H1 (cell line): ENCODE measurements at regions of chr2 and their contacts with region 1.

Region 1: GRCh38 chr2:106868275-106868674 is 17.7 kb downstream of the ST6GAL2 start:
- DNase-seq: no peak
- H3K4me3 ChIP-seq: no peak overlapping the region
- H3K27ac ChIP-seq: no peak overlapping the region
- H3K4me1 ChIP-seq: peaks cover 0 to 10% (median 6%) of the 10 kb centered on the region in 4 experiments; a peak in 4 of 7 replicates
- H3K27me3 ChIP-seq: peaks cover 0 to 1% (median 0%) of the 10 kb centered on the region in 4 experiments; a peak in 1 of 7 replicates
- CTCF ChIP-seq: peak; percentile 40 to 72 (median 44); a peak in 3 of 4 replicates
- EP300 ChIP-seq: no peak
- POLR2A ChIP-seq: no peak
- RAD21 ChIP-seq: peak; percentile 54 to 57

Region 2: GRCh38 chr2:106847366-106847765 is 20.9 kb before region 1 on chr2:
- CTCF ChIA-PET with region 1: interaction called, 19 read pairs
- POLR2A ChIA-PET with region 1: no interaction called
- DNase-seq: no peak
- H3K4me3 ChIP-seq: no peak overlapping the region
- H3K27ac ChIP-seq: no peak overlapping the region
- H3K4me1 ChIP-seq: peaks cover 0 to 16% (median 8%) of the 10 kb centered on the region in 4 experiments; a peak in 4 of 7 replicates
- H3K27me3 ChIP-seq: no peaks in the 10 kb centered on the region
- CTCF ChIP-seq: no peak
- EP300 ChIP-seq: no peak
- POLR2A ChIP-seq: no peak
- RAD21 ChIP-seq: no peak

Region 3: GRCh38 chr2:106853631-106854030 is 14.6 kb before region 1 on chr2:
- CTCF ChIA-PET with region 1: interaction called, 19 read pairs
- POLR2A ChIA-PET with region 1: no interaction called
- DNase-seq: no peak
- H3K4me3 ChIP-seq: no peak overlapping the region
- H3K27ac ChIP-seq: no peak overlapping the region
- H3K4me1 ChIP-seq: peaks cover 3 to 19% (median 14%) of the 10 kb centered on the region in 4 experiments
- H3K27me3 ChIP-seq: no peaks in the 10 kb centered on the region
- CTCF ChIP-seq: no peak
- EP300 ChIP-seq: no peak
- POLR2A ChIP-seq: no peak
- RAD21 ChIP-seq: no peak

Region 4: DNA sequence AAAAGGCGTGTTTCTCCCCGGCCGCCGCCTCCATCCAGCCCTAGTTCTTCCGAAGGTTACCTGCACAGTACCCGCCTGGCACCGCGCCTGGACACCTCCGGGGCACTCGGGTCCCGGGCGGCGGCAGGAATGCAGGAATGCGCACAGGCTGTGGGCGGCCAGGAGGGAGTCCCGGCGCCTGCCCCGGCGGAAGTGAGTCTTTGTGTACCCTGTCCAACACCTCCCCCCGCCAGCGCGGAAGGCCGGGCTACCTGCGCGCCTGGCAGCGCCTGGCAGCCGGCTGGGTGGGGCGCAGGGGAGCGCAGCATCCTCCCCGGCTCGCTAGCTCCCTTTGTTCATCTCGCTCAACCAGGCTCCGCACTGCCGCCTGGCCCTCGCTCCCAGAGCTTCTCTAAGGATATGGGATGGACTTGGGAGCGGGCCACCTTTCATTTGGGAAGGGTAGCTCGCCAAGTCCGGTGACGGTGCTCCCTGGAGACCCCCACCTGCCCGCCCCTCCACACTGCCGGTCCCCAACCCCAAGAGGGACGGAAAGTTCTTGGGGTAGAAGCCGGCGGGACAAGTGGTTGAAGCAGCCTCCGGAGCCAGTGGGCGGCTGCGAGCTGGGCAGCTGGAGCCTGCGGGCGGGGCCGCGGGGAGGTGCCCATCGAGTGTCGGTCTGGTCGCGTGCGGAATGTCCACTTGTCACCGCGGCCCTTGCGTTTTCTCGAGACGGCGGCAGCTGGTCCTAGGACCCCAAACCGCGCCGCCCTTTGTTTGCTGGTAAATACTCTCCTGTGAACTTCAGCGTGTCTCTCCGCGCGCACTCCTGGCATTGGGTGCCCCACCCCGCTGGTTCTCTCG is 18.9 kb after region 1 on chr2:
- CTCF ChIA-PET with region 1: interaction called, 10 read pairs
- POLR2A ChIA-PET with region 1: interaction called, 17 read pairs
- DNase-seq: peak; percentile 51 to 85
- H3K4me3 ChIP-seq: peak overlapping the region; percentile 74 to 78 (median 74)
- H3K27ac ChIP-seq: no peak overlapping the region
- H3K4me1 ChIP-seq: peaks cover 0 to 15% (median 6%) of the 10 kb centered on the region in 4 experiments; a peak in 5 of 7 replicates
- H3K27me3 ChIP-seq: peaks cover 0 to 22% (median 16%) of the 10 kb centered on the region in 4 experiments; a peak in 6 of 7 replicates
- CTCF ChIP-seq: no peak
- EP300 ChIP-seq: no peak; a peak in 1 of 3 replicates
- POLR2A ChIP-seq: peak in 1 of 2 experiments; percentile 65; a peak in 2 of 3 replicates
- RAD21 ChIP-seq: peak in 1 of 2 experiments; percentile 1; a peak in 1 of 4 replicates

Region 5: GRCh38 chr2:106904231-106904630 is 36.0 kb after region 1 on chr2:
- CTCF ChIA-PET with region 1: no interaction called
- POLR2A ChIA-PET with region 1: no interaction called
- DNase-seq: no peak
- H3K4me3 ChIP-seq: no peak overlapping the region
- H3K27ac ChIP-seq: no peak overlapping the region
- H3K4me1 ChIP-seq: no peaks in the 10 kb centered on the region
- H3K27me3 ChIP-seq: no peaks in the 10 kb centered on the region
- CTCF ChIP-seq: no peak
- EP300 ChIP-seq: no peak
- POLR2A ChIP-seq: no peak
- RAD21 ChIP-seq: no peak